ENCODE measurements at regions of chrX and their contacts with region 1.

Region 1: GRCh38 chrX:111098874-111099273 is 2.9 kb downstream of the PAK3 start:
- DNase-seq: peak; percentile 31 to 47
- ATAC-seq: peak in 1 of 2 experiments; percentile 73; a peak in 3 of 6 replicates
- H3K4me3 ChIP-seq: no peak overlapping the region
- H3K27ac ChIP-seq: no peak overlapping the region
- H3K4me1 ChIP-seq: no peaks in the 10 kb centered on the region
- CTCF ChIP-seq: peak; percentile 45
- EP300 ChIP-seq: no peak
- POLR2A ChIP-seq: no peak
- RAD21 ChIP-seq: 0 out of 5 replicates have a peak, but pooled peaks of 1 of the 2 experiments have one; percentile 9

Region 2: DNA sequence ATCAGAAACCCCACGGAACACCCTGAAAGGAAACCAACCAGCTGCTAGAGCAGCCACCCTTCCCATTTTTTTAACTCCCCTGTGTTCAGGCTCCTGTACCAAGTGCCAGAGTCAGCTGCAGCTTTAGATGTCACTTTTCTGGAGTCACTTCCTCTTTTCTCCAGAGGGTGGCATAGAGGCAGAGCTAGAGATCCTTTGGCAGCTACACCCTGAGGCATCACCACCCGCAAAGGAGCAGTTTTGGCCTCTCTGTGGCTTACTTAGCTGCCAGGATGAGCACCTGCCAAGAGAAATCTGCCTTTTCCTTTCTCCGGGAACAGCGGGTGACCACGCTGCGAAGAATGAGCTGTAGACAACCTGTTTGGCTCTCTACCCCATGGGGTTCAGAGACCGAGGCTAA is 245.3 kb before region 1 on chrX:
- CTCF ChIA-PET with region 1: interaction called, 11 read pairs
- POLR2A ChIA-PET with region 1: interaction called, 3 read pairs
- DNase-seq: peak; percentile 5 to 6
- ATAC-seq: peak; percentile 70 to 79; a peak in 5 of 6 replicates
- H3K4me3 ChIP-seq: no peak overlapping the region
- H3K27ac ChIP-seq: no peak overlapping the region
- H3K4me1 ChIP-seq: peaks cover 6% of the 10 kb centered on the region; the same call in 1 of the 3 replicates
- CTCF ChIP-seq: peak; percentile 18; the same call in 1 of the 3 replicates
- EP300 ChIP-seq: no peak
- POLR2A ChIP-seq: no peak
- RAD21 ChIP-seq: 0 out of 5 replicates have a peak, but pooled peaks of 1 of the 2 experiments have one; percentile 12

Region 3: DNA sequence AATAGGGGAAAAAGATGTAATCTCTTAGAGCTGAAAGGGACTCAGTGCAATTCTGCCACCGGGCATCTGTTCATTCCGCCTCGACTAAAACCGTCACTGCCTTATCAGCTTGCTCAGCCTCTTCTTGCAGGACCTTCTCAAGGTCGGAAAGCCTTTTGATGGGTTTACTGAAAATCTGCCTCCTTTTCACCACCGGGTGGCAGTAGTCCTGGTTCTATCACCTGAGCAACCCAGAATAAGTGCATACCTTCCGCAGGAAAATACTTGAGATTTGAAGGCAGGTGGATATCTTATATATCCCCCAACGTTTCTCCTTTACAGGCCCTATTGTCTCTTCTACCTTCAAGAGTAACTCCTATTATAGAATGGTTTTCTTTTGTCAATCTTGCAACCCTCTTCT is 106.3 kb before region 1 on chrX:
- CTCF ChIA-PET with region 1: interaction called, 23 read pairs
- POLR2A ChIA-PET with region 1: no interaction called
- DNase-seq: peak; percentile 10 to 21
- ATAC-seq: peak; percentile 56 to 71; a peak in 4 of 6 replicates
- H3K4me3 ChIP-seq: no peak overlapping the region
- H3K27ac ChIP-seq: no peak overlapping the region
- H3K4me1 ChIP-seq: no peaks in the 10 kb centered on the region
- CTCF ChIP-seq: peak; percentile 48
- EP300 ChIP-seq: no peak
- POLR2A ChIP-seq: no peak
- RAD21 ChIP-seq: peak; percentile 14 to 35; a peak in 1 of 5 replicates

Region 4: DNA sequence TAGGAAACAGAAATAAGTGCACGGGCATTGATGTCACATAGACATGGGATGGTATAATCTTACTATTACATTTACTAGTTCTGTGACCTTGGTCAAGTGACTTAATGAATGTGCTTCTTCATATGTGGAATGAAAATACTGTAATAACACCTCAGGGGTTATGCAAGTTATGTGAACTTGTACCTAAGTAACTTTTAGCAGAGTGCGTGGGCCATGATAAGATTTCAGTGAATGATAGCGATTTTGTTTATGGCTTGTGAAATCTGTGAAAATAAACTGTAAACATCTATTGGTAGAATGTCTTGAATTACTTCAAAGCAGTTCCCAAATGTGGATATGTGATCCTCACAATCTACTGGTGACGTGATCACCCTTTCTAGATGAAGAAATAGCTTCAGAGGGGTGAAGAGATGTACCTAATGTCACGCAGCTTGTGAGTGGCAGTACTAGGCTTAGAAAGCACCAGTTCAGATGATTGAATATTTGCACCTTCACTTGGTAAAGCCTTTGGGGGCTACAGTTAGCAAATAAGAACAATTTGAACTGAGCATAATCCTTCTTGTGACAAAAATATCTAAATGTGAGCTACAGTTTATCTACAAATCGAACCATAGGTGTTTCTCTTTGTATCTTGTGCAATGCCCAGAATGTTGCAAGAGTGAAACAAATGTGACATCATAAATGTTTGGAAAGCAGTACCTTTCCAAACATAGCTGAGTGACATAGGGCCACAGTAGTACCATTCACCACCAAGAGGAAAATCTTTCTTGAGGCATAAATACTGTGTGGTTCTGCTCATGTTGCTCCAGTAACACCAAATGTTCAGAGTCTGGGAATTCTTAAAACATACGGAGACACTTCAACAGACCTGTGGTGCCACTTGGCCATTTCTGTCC is 11.3 kb after region 1 on chrX:
- CTCF ChIA-PET with region 1: interaction called, 15 read pairs
- POLR2A ChIA-PET with region 1: no interaction called
- DNase-seq: no peak
- ATAC-seq: no peak
- H3K4me3 ChIP-seq: no peak overlapping the region
- H3K27ac ChIP-seq: no peak overlapping the region
- H3K4me1 ChIP-seq: no peaks in the 10 kb centered on the region
- CTCF ChIP-seq: no peak
- EP300 ChIP-seq: no peak
- POLR2A ChIP-seq: no peak
- RAD21 ChIP-seq: no peak

Measured in A549 (cell line).